ENCODE measurements at regions of chr10 and their contacts with region 1.

Region 1: GRCh38 chr10:75401569-75402485 is at the start of gene ZNF503:
- DNase-seq: peak; percentile 60
- ATAC-seq: peak; percentile 67
- H3K4me3 ChIP-seq: peak within 1 kb of the TSS; percentile 61
- H3K27ac ChIP-seq: peak within 1 kb of the TSS; percentile 90
- H3K4me1 ChIP-seq: peaks cover 25% of the 10 kb centered on the region
- H3K27me3 ChIP-seq: peaks cover 30% of the 10 kb centered on the region
- CTCF ChIP-seq: peak; percentile 8; the same call in 1 of the 2 replicates
- total RNA-seq, gene ZNF503: 10.4 TPM

Region 2: DNA sequence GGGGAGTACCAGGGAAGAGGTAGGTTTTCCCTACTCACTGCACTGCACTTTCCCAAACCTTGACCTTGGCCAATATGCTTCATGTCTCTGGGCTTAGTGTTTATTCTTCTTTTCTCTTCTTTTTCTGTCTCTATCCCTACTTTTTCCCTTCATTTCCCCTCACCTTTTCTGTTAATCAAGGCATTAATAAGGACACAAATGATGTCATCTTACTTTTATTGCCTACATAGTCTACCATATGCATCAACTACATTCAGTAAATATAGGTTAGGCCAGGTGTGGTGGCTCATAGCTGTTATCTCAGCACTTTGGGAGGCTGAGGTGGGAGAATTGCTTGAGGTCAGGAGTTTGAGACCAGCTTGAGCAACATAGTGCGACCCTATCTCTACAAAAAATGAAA is 12.7 kb after region 1 on chr10:
- CTCF ChIA-PET with region 1: interaction called, 12 read pairs
- POLR2A ChIA-PET with region 1: no interaction called
- in situ Hi-C with region 1: no loop called
- intact Hi-C with region 1: no loop called
- DNase-seq: no peak
- ATAC-seq: no peak
- H3K4me3 ChIP-seq: no peak overlapping the region
- H3K27ac ChIP-seq: no peak overlapping the region
- H3K4me1 ChIP-seq: no peaks in the 10 kb centered on the region
- H3K27me3 ChIP-seq: peaks cover 19% of the 10 kb centered on the region; the same call in 1 of the 2 replicates
- CTCF ChIP-seq: no peak

Region 3: GRCh38 chr10:75910032-75910431 is 508.2 kb after region 1 on chr10:
- CTCF ChIA-PET with region 1: no interaction called
- POLR2A ChIA-PET with region 1: no interaction called
- in situ Hi-C with region 1: no loop called
- intact Hi-C with region 1: loop called (anchors 10 kb)
- DNase-seq: no peak
- ATAC-seq: no peak
- H3K4me3 ChIP-seq: no peak overlapping the region
- H3K27ac ChIP-seq: no peak overlapping the region
- H3K4me1 ChIP-seq: no peaks in the 10 kb centered on the region
- H3K27me3 ChIP-seq: peaks cover 11% of the 10 kb centered on the region; the same call in 1 of the 2 replicates
- CTCF ChIP-seq: peak; percentile 35; the same call in 1 of the 2 replicates

Region 4: DNA sequence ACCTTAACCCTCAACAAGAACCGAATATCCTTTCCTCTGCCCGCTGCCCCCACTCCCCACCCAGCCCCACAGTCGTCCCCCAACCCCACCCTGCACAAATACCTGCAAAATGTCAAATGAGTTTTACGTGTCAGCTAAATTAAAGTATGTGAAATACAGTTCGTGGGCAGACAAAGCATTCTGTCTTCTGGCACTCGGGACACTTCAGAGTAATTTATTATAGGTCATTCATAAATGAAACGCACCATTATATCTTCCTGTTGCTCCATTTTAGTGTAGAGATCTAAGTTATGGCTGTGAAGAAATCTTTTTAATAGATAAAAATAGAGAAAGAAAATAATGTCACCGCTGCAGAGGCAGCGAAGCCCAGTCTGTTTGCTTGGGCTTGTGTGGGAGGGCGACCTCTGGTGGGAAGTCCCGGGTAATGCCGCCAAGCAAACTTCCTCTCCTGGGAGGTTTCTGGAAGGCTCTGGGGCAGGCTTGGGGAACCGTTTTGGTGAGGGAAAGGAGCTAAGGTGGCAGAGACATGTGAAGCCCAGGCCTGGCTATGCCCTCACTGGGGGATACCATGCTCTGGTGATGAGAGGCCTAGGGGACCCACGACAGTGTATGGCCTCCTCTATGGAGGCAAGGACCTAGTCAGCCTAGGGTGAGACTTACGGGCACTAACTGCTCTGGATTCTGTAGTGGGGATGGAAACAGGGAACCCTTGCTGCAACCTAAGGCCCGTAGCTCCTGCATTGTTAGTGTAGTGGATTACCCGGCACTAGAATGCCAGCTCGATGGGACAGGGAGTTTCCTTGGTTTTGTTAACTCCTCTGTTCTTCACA is 634.5 kb after region 1 on chr10:
- CTCF ChIA-PET with region 1: no interaction called
- POLR2A ChIA-PET with region 1: no interaction called
- in situ Hi-C with region 1: no loop called
- intact Hi-C with region 1: loop called (anchors 5 kb)
- DNase-seq: peak; percentile 28
- ATAC-seq: peak; percentile 97
- H3K4me3 ChIP-seq: no peak overlapping the region
- H3K27ac ChIP-seq: no peak overlapping the region
- H3K4me1 ChIP-seq: no peaks in the 10 kb centered on the region
- H3K27me3 ChIP-seq: no peaks in the 10 kb centered on the region
- CTCF ChIP-seq: peak; percentile 98

Region 5: GRCh38 chr10:76303682-76304316 is 902.0 kb after region 1 on chr10:
- CTCF ChIA-PET with region 1: interaction called, 6 read pairs
- POLR2A ChIA-PET with region 1: no interaction called
- in situ Hi-C with region 1: no loop called
- intact Hi-C with region 1: loop called (anchors 10 kb)
- DNase-seq: peak; percentile 27
- ATAC-seq: peak; percentile 90
- H3K4me3 ChIP-seq: no peak overlapping the region
- H3K27ac ChIP-seq: no peak overlapping the region
- H3K4me1 ChIP-seq: no peaks in the 10 kb centered on the region
- H3K27me3 ChIP-seq: peaks cover 7% of the 10 kb centered on the region; the same call in 1 of the 2 replicates
- CTCF ChIP-seq: peak; percentile 64

Region 6: GRCh38 chr10:76547352-76547972 is 1145.6 kb after region 1 on chr10:
- CTCF ChIA-PET with region 1: no interaction called
- POLR2A ChIA-PET with region 1: interaction called, 3 read pairs
- in situ Hi-C with region 1: no loop called
- intact Hi-C with region 1: loop called (anchors 10 kb)
- DNase-seq: peak; percentile 38
- ATAC-seq: peak; percentile 81
- H3K4me3 ChIP-seq: no peak overlapping the region
- H3K27ac ChIP-seq: no peak overlapping the region
- H3K4me1 ChIP-seq: no peaks in the 10 kb centered on the region
- H3K27me3 ChIP-seq: peaks cover 11% of the 10 kb centered on the region
- CTCF ChIP-seq: peak; percentile 90

Region 7: GRCh38 chr10:76984559-76985443 is 1583.0 kb after region 1 on chr10:
- CTCF ChIA-PET with region 1: no interaction called
- POLR2A ChIA-PET with region 1: no interaction called
- in situ Hi-C with region 1: no loop called
- intact Hi-C with region 1: loop called (anchors 5 kb)
- DNase-seq: peak; percentile 61
- ATAC-seq: peak; percentile 97
- H3K4me3 ChIP-seq: no peak overlapping the region
- H3K27ac ChIP-seq: no peak overlapping the region
- H3K4me1 ChIP-seq: no peaks in the 10 kb centered on the region
- H3K27me3 ChIP-seq: no peaks in the 10 kb centered on the region
- CTCF ChIP-seq: peak; percentile 98

Measured in Panc1 (cell line).